Ascending aorta (tissue), 2 donors: ENCODE measurements at regions of chr3 and their contacts with region 1.

Region 1: DNA sequence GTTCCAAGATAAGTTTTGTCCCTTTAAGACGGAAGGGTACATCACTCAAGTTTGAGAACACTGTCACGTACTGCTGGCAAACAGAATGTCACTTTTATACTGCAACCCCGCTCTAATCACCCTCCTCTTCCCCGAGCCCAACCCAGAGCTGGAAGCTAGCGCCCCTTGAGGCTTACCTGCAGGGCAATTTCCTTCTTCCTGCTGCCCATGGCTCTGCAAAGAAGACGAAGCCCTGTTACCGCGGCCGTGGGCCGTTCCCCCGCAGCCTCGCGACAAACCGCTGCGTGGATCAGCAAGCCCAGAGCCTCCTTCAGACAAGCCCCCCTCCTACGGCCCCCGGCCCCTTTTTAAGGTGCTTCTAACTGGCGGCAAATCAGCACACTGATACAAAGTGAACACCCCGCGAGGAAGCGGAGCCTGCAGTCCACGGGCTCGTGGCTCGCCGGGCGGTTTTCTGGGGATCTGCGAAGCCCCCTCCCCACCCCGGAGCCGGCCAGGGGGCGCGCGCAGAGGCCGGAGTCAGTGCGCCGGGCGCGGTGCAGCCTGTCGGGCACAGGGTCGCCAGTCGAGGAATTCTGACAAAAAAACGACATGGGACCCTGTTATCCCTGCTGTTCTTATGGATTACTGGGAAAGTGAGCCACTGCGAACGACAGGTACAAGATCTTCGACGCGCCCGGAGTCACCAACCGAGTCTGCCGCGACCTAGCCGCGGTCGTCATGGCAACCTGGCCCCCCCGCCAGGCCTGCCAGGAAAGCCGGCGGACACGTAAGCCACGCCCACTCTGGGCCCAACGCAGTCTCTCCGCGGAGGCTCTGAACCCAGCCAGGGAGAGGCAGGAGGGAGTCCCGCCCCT is at the start of gene NME9:
- DNase-seq: peak; percentile 53 to 93
- H3K4me3 ChIP-seq: peak within 1 kb of the TSS; percentile 51 to 76
- H3K27ac ChIP-seq: peak within 1 kb of the TSS; percentile 2 to 29
- H3K4me1 ChIP-seq: peaks cover 3 to 6% of the 10 kb centered on the region in 2 donors
- H3K27me3 ChIP-seq: no peaks in the 10 kb centered on the region
- CTCF ChIP-seq: peak in 2 of 3 experiments; percentile 49 to 68
- total RNA-seq, gene NME9: not detected

Region 2: DNA sequence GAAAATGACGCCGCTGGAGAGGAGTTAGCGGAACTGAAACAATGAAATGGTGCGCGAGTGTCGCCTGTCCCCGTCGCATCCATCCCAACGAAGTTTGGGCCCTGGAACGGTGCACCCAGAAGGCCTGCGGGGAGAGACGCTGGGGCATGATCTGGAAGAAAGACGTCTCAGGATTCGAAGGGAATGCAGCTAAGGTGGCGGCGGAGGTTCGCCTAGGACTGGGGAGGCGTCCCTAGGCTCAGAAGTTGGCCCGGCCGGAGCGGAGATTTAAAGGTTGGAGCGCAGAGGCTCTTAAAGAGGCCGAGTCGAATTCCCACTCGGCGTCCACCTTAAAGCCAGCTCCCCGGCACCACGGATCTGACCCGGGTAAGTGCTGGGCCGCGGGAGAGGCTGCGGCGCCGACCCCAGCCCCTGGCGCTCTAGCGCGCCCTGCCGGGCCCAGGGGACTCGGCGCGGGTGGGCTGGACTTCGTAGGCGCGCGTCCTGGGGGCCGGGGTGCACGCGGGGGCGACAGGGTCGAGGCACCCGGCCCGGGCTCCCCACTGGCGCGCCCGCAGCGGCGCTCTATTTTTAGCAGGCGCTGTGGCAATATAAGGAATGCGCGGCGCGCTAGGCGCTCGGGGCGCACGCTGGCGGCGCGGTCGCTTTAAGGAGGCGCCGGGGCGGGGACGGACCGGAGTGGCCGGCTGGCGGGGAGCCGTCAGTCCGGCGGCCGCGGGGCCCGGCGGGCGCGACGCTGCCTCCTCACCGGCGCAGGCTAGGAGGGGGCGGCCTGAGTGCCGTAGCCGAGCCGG is 18.8 kb after region 1 on chr3 and contains the start of gene MRAS:
- intact Hi-C with region 1: loop called (anchors 1 kb)
- DNase-seq: peak; percentile 28 to 91
- H3K4me3 ChIP-seq: peak within 1 kb of the TSS; percentile 96 to 98
- H3K27ac ChIP-seq: peak within 1 kb of the TSS; percentile 92 to 99
- H3K4me1 ChIP-seq: peaks cover 5 to 7% of the 10 kb centered on the region in 2 donors
- H3K27me3 ChIP-seq: no peaks in the 10 kb centered on the region
- CTCF ChIP-seq: peak in 2 of 3 experiments; percentile 28 to 39
- total RNA-seq, gene MRAS: 24.5 TPM

Region 3: GRCh38 chr3:138923531-138923994 is 594.2 kb after region 1 on chr3:
- intact Hi-C with region 1: loop called (anchors 5 kb)
- DNase-seq: peak; percentile 41 to 87
- H3K4me3 ChIP-seq: no peak overlapping the region
- H3K27ac ChIP-seq: no peak overlapping the region
- H3K4me1 ChIP-seq: peaks cover 0 to 2% of the 10 kb centered on the region in 2 donors
- H3K27me3 ChIP-seq: no peaks in the 10 kb centered on the region
- CTCF ChIP-seq: peak; percentile 42 to 76 (median 72)